SK-N-SH (cell line): ENCODE measurements at regions of chr6 and their contacts with region 1.

Region 1: DNA sequence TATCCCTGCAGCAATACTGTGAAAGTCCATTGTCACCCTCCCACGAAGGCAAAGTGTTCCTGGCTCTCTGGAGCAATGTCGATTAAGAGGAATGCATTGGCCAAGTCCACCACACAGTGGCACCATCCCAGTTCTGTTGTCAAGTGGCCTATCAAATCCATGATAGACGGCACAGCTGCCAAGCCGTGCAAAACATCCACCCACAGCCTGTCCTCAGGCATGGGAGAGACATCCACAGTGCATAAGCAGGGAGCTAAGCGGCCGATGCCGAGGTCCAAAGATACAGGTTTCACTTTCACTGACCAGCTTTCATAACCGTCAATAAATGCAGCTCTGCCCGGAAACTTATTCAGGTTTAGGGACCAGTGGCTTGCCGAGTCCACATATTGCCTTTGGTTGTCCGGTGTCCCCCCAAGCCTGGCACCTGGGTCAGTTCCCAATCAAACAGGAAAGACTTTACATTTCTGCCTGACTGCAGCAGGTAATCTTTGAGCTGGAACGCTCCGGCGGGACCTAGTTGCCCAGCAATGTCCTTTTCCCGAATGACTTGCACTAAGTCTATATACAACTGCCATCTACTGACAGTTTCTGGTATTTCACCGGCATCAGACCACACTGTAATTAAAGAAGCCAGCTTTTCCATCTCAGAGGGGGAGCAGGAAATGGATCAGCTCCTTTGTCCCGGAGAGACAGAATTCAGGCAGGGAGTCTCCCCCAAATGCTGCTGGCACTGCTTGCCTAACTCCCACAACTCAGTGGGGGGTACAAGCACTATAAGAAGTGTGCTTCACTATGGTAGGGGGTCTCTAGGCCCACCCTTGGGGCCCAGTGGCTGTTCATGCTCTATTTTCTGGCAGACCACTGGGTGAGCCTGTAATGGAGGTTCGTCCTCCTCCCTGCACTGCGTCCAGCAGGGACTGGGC is 6.3 kb downstream of the ZKSCAN3 start:
- DNase-seq: peak; percentile 74
- H3K4me3 ChIP-seq: peak overlapping the region; percentile 75 to 84
- H3K27ac ChIP-seq: peak overlapping the region; percentile 59 to 71; a peak in 3 of 4 replicates
- H3K4me1 ChIP-seq: peaks cover 10 to 20% of the 10 kb centered on the region in 2 experiments; a peak in 3 of 4 replicates
- H3K27me3 ChIP-seq: no peaks in the 10 kb centered on the region
- CTCF ChIP-seq: peak; percentile 68
- EP300 ChIP-seq: no peak
- RAD21 ChIP-seq: peak; percentile 85

Region 2: GRCh38 chr6:28136585-28137504 is 219.2 kb before region 1 on chr6:
- CTCF ChIA-PET with region 1: interaction called, 12 read pairs
- POLR2A ChIA-PET with region 1: interaction called, 12 read pairs
- DNase-seq: peak; percentile 79
- H3K4me3 ChIP-seq: peak overlapping the region; percentile 86 to 90
- H3K27ac ChIP-seq: peak overlapping the region; percentile 88 to 97
- H3K4me1 ChIP-seq: peaks cover 0 to 17% of the 10 kb centered on the region in 2 experiments; a peak in 3 of 4 replicates
- H3K27me3 ChIP-seq: no peaks in the 10 kb centered on the region
- CTCF ChIP-seq: no peak
- EP300 ChIP-seq: peak in 1 of 2 experiments; percentile 50; a peak in 1 of 4 replicates
- RAD21 ChIP-seq: no peak

Region 3: DNA sequence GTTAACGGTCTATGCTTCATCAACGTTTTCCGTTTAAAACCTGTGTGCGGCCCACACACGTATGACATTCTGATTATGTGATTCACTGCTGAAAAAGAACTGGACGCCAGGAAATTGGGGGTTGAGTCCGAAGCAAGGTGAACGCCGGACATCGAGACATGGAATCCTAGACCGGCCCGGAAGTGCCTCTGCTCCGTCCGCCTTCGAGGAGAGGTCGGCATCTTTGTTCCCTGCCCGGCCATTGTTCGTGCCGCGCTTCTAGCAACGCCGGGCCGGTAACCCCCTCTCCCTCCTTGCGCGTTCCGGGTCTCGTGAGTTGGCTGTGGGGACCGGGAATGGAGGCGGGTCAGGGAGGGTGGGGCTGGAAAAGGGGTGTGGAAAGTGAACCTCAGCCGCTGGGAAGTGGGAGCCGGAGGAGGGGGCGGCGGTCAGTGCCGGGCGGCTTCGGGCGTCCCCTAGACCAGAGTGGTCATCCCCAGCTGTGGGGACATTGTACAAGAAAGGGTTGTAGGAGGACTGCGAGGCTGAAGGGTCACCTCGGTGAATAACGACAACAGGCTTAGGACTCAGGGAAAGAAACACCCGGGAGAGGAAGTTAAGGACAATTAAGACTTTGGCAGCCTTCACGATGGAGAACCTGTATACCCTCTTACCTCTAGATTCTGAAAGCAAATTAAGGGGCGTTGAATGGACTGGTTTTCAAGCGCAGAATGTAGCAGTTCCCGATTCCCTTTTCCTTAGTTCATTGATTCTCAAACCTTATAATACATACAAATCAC is 130.8 kb before region 1 on chr6 and contains the start of gene ZSCAN9:
- CTCF ChIA-PET with region 1: interaction called, 11 read pairs
- POLR2A ChIA-PET with region 1: no interaction called
- DNase-seq: peak; percentile 88
- H3K4me3 ChIP-seq: peak within 1 kb of the TSS; percentile 78 to 92
- H3K27ac ChIP-seq: peak within 1 kb of the TSS; percentile 62 to 84
- H3K4me1 ChIP-seq: peaks cover 0 to 7% of the 10 kb centered on the region in 2 experiments; a peak in 3 of 4 replicates
- H3K27me3 ChIP-seq: no peaks in the 10 kb centered on the region
- CTCF ChIP-seq: no peak
- EP300 ChIP-seq: peak in 1 of 2 experiments; percentile 34; a peak in 1 of 4 replicates
- RAD21 ChIP-seq: no peak; the same call in 1 of the 2 replicates
- polyA plus RNA-seq, gene ZSCAN9: 13.7 and 23.2 TPM in 2 replicates

Region 4: DNA sequence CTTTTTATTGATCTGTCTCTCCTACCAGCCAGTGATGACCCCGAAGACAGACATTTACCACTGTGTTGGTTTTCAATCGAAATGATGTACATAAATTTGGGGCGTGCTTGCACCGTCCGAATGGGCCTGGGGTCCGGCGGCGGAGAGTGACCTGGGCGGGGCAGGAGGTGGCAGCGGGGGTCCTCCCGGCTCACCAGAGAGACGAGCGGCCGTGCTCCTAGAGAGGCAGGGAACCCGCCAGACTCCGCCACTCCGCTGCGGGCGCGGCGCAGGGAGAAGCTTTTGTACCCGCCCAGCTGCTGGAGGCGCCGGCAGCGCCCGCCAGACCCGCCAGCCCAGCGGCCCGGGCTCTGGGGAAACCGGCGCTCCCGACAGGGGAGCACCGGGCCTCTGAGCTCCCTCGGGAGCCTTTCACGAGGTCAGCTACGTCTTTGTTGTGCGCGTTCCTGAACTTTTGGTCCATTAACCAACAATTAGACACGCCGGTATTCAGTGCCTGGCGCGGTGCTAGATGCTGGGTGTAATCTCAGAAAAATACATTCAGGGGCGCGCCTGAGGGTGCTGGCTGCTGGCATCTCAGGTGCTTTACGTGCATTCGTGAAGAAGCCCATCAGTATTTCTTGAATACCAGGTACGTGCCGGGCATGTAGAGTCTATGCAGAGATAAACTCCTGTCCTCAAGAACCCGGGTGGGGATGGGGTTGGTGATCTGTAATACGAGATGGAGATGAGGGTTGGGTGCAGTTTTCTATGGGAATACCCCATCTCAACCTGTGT is 74.5 kb before region 1 on chr6 and contains the start of gene PGBD1:
- CTCF ChIA-PET with region 1: interaction called, 10 read pairs
- POLR2A ChIA-PET with region 1: interaction called, 7 read pairs
- DNase-seq: peak; percentile 92
- H3K4me3 ChIP-seq: peak within 1 kb of the TSS; percentile 93 to 98
- H3K27ac ChIP-seq: peak within 1 kb of the TSS; percentile 35 to 83; a peak in 3 of 4 replicates
- H3K4me1 ChIP-seq: peaks cover 0 to 7% of the 10 kb centered on the region in 2 experiments; a peak in 2 of 4 replicates
- H3K27me3 ChIP-seq: no peaks in the 10 kb centered on the region
- CTCF ChIP-seq: no peak
- EP300 ChIP-seq: no peak
- RAD21 ChIP-seq: no peak; the same call in 1 of the 2 replicates
- polyA plus RNA-seq, gene PGBD1: 2.5 and 2.7 TPM in 2 replicates

Region 5: DNA sequence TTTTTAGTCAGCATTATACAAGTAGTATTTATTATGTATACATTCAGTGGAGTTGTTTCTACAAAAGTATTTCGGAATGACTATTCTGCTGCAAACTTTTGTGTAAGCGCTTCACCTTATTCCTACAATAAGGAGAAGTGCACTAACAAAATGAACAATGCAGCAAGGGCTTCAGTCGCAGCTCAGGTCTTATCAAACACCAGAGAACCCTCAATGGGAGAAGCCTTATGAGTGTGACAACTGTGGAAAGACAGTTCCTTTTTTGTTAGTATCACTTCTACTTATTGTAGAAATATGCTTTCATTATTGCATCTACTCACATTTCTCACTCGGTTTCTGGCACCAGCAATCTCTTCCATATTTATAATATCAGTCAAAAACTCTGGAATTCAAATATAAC is 12.5 kb after region 1 on chr6:
- CTCF ChIA-PET with region 1: interaction called, 12 read pairs
- POLR2A ChIA-PET with region 1: no interaction called
- DNase-seq: no peak
- H3K4me3 ChIP-seq: no peak overlapping the region
- H3K27ac ChIP-seq: no peak overlapping the region
- H3K4me1 ChIP-seq: no peaks in the 10 kb centered on the region
- H3K27me3 ChIP-seq: no peaks in the 10 kb centered on the region
- CTCF ChIP-seq: no peak
- EP300 ChIP-seq: no peak
- RAD21 ChIP-seq: no peak

Region 6: GRCh38 chr6:28458564-28458963 is 102.6 kb after region 1 on chr6:
- CTCF ChIA-PET with region 1: no interaction called
- POLR2A ChIA-PET with region 1: no interaction called
- DNase-seq: no peak
- H3K4me3 ChIP-seq: no peak overlapping the region
- H3K27ac ChIP-seq: no peak overlapping the region
- H3K4me1 ChIP-seq: no peaks in the 10 kb centered on the region
- H3K27me3 ChIP-seq: peaks cover 5% of the 10 kb centered on the region; the same call in 1 of the 2 replicates
- CTCF ChIP-seq: no peak
- EP300 ChIP-seq: no peak
- RAD21 ChIP-seq: no peak

Region 7: DNA sequence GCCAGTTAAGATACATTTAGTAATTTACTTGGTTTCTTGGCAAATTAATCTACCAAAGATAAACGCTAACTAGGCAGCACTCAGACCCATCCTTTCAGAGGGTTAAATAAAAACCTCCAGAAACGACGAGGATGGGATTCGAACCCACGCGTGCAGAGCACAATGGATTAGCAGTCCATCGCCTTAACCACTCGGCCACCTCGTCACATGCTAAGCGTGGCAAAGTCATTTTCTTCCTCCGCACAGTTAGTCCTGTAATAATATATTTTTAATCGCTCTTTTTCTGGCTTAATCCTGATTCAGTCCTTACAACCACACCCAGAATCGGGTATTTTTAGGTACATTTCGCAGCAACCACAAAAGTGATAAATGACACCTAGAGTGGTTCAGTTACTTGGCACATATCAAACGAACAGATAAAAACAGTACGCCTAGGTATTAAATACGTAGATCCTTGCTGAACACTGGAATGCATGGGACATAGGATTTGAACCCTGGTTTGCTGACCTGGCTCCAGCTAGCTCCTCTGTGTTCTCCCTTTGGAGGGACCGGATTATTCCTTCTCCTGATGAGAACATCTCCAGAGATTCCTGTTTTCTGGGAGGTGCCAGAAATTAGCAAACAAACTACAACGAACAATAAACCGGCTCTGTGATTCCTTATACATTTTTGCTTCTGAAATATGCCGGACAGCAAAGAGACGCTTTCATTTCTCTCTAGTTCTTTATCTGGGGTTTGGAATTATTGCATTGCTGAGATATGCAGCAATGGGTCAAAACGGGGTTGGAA is 241.4 kb after region 1 on chr6:
- CTCF ChIA-PET with region 1: no interaction called
- POLR2A ChIA-PET with region 1: no interaction called
- DNase-seq: peak; percentile 40
- H3K4me3 ChIP-seq: peak overlapping the region; percentile 49
- H3K27ac ChIP-seq: peak overlapping the region in 1 of 2 experiments; percentile 41; a peak in 1 of 4 replicates
- H3K4me1 ChIP-seq: no peaks in the 10 kb centered on the region
- H3K27me3 ChIP-seq: no peaks in the 10 kb centered on the region
- CTCF ChIP-seq: no peak
- EP300 ChIP-seq: no peak
- RAD21 ChIP-seq: no peak